ENCODE measurements at regions of chr3 and their contacts with region 1.

Region 1: GRCh38 chr3:107833043-107833442 is 257.8 kb downstream of the CD47 start:
- DNase-seq: no peak
- CTCF ChIP-seq: no peak

Region 2: DNA sequence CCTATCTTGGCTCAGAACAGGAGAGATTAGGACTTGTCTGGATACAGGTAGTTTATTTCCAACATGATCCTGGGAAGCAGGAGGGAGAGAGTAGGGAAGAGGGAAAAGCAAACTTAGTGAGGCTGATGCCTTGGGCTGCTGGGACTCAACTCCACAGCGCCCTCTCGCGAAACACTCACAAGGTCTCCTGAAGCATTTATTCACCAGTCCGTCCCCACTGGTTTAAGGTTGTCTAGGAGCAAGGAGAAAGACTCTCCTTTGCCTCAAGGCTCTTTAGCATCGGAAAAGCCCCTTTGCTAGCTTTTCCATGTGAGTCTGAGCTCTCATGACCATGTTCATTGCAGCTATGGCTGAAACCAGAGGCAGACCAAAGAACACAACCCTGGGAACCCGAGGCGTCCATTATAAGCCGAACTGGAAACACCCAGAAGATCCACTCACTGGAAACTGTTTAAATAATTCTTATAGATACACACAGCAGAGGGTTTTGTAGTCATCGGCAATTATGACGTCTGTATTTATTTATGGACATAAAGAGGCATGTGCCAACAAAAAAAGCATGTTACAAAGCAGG is 13.3 kb after region 1 on chr3:
- CTCF ChIA-PET with region 1: interaction called, 16 read pairs
- POLR2A ChIA-PET with region 1: no interaction called
- DNase-seq: peak; percentile 46
- CTCF ChIP-seq: peak; percentile 59

Measured in GM10248 (cell line).